ENCODE measurements at regions of chr15 and their contacts with region 1.

Region 1: GRCh38 chr15:63111481-63111880 is 10.2 kb upstream of the LACTB start:
- DNase-seq: no peak
- ATAC-seq: no peak
- H3K4me3 ChIP-seq: no peak overlapping the region
- H3K27ac ChIP-seq: no peak overlapping the region
- H3K4me1 ChIP-seq: no peaks in the 10 kb centered on the region
- H3K27me3 ChIP-seq: no peaks in the 10 kb centered on the region
- CTCF ChIP-seq: no peak

Region 2: GRCh38 chr15:63391656-63392360 is 280.3 kb after region 1 on chr15:
- CTCF ChIA-PET with region 1: no interaction called
- POLR2A ChIA-PET with region 1: interaction called, 17 read pairs
- intact Hi-C with region 1: no loop called
- DNase-seq: no peak
- ATAC-seq: no peak
- H3K4me3 ChIP-seq: no peak overlapping the region
- H3K27ac ChIP-seq: no peak overlapping the region
- H3K4me1 ChIP-seq: no peaks in the 10 kb centered on the region
- H3K27me3 ChIP-seq: no peaks in the 10 kb centered on the region
- CTCF ChIP-seq: no peak

Measured in PC-3 (cell line).